Gastrocnemius medialis (tissue), 4 donors: ENCODE measurements at regions of chr4 and their contacts with region 1.

Region 1: GRCh38 chr4:3193531-3194203 is 55.3 kb upstream of the MSANTD1 start:
- DNase-seq: no peak
- ATAC-seq: no peak
- H3K4me3 ChIP-seq: no peak overlapping the region
- H3K27ac ChIP-seq: no peak overlapping the region
- H3K4me1 ChIP-seq: peaks cover 7% of the 10 kb centered on the region in 2 donors
- H3K27me3 ChIP-seq: no peaks in the 10 kb centered on the region
- CTCF ChIP-seq: peak in 3 of 5 experiments; percentile 22 to 42 (median 31)
- POLR2A ChIP-seq: no peak

Region 2: GRCh38 chr4:3248811-3249661 is 55.4 kb after region 1 on chr4 and contains the start of gene MSANTD1:
- in situ Hi-C with region 1: no loop called
- intact Hi-C with region 1: loop called (anchors 10 kb)
- DNase-seq: no peak
- ATAC-seq: no peak
- H3K4me3 ChIP-seq: no peak within 1 kb of the TSS
- H3K27ac ChIP-seq: no peak within 1 kb of the TSS
- H3K4me1 ChIP-seq: no peaks in the 10 kb centered on the region
- H3K27me3 ChIP-seq: no peaks in the 10 kb centered on the region
- CTCF ChIP-seq: no peak
- POLR2A ChIP-seq: no peak
- total RNA-seq, gene MSANTD1: 0.36 to 1.5 (median 0.48) TPM

Region 3: DNA sequence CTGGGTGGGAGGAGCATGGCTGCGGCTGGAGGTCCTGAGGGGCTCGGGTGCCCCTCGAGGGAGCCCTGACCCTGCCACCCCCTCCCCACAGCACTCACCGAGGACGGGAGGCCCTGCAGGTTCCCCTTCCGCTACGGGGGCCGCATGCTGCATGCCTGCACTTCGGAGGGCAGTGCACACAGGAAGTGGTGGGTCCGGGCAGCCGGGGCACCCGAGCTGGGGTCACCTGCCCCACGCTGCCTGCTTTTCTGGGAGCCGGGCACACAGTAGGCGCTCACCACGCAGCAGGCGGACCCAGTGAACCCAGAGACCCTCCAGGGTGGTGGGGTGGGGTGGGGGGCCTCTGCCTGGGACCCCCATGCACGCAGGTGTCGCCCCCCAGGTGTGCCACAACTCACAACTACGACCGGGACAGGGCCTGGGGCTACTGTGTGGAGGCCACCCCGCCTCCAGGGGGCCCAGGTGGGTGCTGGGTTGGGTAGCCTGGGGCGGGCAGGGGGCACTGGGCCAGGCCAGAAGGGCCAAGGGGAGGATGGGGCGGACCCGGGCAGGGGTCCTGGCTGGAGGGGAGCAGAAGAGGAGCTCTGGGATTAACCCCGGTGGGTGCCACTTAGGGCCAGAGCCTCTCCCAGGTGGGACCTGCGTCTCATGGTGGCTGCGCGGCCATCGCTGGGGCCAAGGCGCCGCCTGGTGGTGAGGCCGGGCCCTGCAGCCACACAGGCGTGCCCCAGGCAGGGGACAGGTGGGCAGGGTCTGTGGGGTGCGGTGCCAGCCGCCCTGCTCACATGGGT is 249.5 kb after region 1 on chr4:
- in situ Hi-C with region 1: no loop called
- intact Hi-C with region 1: loop called (anchors 10 kb)
- DNase-seq: peak in 1 of 2 donors; percentile 41
- ATAC-seq: peak; percentile 57 to 86
- H3K4me3 ChIP-seq: no peak overlapping the region
- H3K27ac ChIP-seq: no peak overlapping the region
- H3K4me1 ChIP-seq: no peaks in the 10 kb centered on the region
- H3K27me3 ChIP-seq: no peaks in the 10 kb centered on the region
- CTCF ChIP-seq: peak; percentile 97 to 99 (median 98)
- POLR2A ChIP-seq: no peak